ENCODE measurements at regions of chr9 and their contacts with region 1.

Region 1: GRCh38 chr9:78097541-78097940 is 65.9 kb upstream of the GNAQ start:
- DNase-seq: no peak
- H3K4me3 ChIP-seq: no peak overlapping the region
- H3K27ac ChIP-seq: no peak overlapping the region
- H3K4me1 ChIP-seq: no peaks in the 10 kb centered on the region
- H3K27me3 ChIP-seq: peaks cover 3% of the 10 kb centered on the region
- CTCF ChIP-seq: no peak

Region 2: GRCh38 chr9:78196258-78196657 is 98.7 kb after region 1 on chr9:
- CTCF ChIA-PET with region 1: no interaction called
- dilution Hi-C with region 1: loop called (anchors 5 kb)
- in situ Hi-C with region 1: no loop called
- intact Hi-C with region 1: no loop called
- DNase-seq: no peak
- H3K4me3 ChIP-seq: no peak overlapping the region
- H3K27ac ChIP-seq: no peak overlapping the region
- H3K4me1 ChIP-seq: no peaks in the 10 kb centered on the region
- H3K27me3 ChIP-seq: no peaks in the 10 kb centered on the region
- CTCF ChIP-seq: no peak

Measured in mammary epithelial cell (primary cell).